ENCODE measurements at regions of chr4 and their contacts with region 1.

Region 1: GRCh38 chr4:39977489-39978377 is at the start of gene PDS5A:
- DNase-seq: peak; percentile 79 to 96
- H3K4me3 ChIP-seq: peak within 1 kb of the TSS; percentile 97
- CTCF ChIP-seq: peak in 2 of 3 donors; percentile 24 to 43
- POLR2A ChIP-seq: no peak
- total RNA-seq, gene PDS5A: 45.7 to 57.6 (median 53.5) TPM

Region 2: DNA sequence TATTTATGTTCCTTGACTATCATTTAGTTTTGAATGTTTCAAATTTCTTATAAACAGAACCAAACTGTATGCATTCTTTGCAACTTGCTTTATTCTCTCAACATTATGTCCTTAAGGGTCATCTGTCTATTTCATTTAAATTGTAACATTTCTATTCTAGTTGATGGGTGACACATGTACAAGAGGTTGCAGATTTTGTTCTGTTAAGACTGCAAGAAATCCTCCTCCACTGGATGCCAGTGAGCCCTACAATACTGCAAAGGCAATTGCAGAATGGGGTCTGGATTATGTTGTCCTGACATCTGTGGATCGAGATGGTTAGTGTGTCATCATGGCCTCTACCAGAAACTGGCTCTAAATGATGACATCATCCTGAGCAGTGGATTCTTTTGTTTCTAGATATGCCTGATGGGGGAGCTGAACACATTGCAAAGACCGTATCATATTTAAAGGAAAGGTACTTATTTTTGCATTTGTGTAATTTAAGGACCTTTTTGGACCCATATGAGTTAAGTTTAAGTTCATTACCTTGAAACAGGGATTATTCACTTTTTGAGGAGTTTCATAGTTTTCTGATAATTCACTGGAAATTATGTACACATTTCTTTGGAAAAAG is 512.7 kb before region 1 on chr4:
- intact Hi-C with region 1: loop called (anchors 5 kb)
- DNase-seq: no peak
- H3K4me3 ChIP-seq: no peak overlapping the region
- CTCF ChIP-seq: no peak
- POLR2A ChIP-seq: no peak

Region 3: DNA sequence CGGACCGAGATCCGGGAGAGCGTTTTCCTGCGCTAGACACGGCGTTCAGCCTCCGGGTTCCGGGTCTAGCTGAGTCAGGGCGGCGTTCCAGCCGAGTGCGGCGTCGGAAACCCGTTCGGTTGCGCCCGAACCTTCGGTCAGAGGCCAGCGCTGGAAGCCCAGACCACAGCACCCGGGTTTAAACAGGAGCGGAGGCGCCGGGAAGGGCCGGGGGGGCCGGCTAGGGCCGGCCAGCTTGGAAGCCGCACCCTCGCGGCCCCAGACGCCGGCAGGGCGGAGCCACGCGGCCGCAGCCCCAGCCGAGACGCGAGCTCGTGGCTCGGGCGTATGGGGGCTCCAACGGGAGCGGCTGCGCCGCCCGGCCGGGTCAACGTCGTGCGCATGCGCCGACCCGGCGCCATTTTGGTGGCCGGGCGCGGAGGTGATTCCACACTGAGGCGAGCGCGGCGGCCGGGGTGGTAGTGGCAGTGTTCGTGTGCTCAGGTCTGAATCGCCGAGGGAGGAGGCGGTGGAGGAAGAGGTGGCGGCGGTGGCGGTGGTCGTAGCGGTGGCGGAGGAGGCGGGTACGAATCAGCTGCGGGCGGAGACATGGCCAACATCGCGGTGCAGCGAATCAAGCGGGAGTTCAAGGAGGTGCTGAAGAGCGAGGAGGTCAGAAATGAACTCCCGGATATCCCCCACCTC is 279.9 kb before region 1 on chr4 and contains the start of gene UBE2K:
- intact Hi-C with region 1: loop called (anchors 5 kb)
- DNase-seq: peak; percentile 72 to 97
- H3K4me3 ChIP-seq: peak within 1 kb of the TSS; percentile 89
- CTCF ChIP-seq: no peak
- POLR2A ChIP-seq: peak in 1 of 2 donors; percentile 10
- total RNA-seq, gene UBE2K: 21.5 to 32.2 (median 25.7) TPM

Region 4: DNA sequence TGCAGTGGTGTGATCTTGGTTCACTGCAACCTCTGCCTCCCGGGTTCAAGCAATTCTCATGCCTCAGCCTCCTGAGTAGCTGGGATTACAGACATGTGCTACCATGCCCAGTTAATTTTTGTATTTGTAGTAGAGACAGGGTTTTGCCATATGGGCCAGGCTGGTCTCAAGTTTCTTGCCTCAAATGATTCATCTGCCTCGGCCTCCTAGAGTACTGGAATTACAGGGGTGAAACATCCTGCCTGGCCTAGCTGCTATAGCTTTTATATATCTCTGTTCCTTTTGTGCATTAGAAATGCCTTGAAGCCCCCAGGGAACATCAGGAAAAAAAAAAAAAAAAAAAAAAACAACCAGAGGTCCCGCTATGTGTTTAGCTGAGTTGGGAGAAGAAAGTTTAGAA is 245.0 kb before region 1 on chr4:
- intact Hi-C with region 1: no loop called
- DNase-seq: no peak
- H3K4me3 ChIP-seq: no peak overlapping the region
- CTCF ChIP-seq: no peak
- POLR2A ChIP-seq: no peak